Activated CD4-positive, alpha-beta T cell treated with anti-CD3 and anti-CD28 coated beads for 36 hours (primary cell): ENCODE measurements at regions of chr6 and their contacts with region 1.

Region 1: DNA sequence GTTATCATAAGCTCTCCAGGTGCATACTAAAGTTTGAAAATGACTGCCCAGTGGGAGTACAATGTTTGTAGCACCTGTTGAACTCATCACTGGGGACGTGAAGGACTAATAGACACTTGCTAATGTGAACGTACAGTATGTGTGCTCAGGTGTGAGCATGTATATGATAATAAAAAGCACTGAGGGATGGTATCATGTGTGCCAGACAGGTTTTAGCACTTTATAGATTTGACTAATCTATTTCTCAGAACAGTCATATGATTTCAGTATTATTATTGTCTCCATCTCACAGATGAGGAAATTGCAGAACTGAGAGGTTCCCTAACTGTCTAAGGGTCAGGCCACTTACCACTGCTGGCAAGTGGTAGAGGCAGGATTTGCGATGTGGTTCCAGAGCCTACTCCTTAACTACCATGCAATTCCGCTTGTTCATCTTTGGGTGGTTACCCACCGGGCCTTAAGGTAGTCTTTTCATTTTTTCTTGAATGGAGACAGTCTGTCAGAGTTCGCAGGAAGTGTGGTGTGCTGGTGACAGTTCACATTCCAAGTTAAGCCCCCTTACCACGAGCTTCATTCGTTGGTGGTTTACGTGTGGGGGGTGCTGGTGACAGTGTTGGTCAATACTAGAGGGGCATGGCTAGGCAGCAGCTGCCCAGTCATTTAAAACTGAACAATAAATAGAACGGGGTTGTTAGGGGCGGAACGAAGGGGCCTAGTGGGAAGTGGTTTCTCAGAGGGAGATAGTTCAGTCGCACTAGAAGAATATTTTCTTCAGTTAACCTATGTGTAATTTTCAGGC is 46.8 kb downstream of the RREB1 start:
- DNase-seq: peak; percentile 41
- ATAC-seq: peak; percentile 78
- H3K4me3 Mint-ChIP-seq: no peak overlapping the region
- H3K27ac Mint-ChIP-seq: peak overlapping the region; percentile 59
- H3K4me1 Mint-ChIP-seq: peaks cover 83% of the 10 kb centered on the region
- H3K27me3 Mint-ChIP-seq: no peaks in the 10 kb centered on the region

Region 2: GRCh38 chr6:7140631-7141378 is 13.7 kb before region 1 on chr6:
- CTCF ChIA-PET with region 1: interaction called, 3 read pairs
- POLR2A ChIA-PET with region 1: interaction called, 6 read pairs
- intact Hi-C with region 1: loop called (anchors 1 to 2 kb)
- DNase-seq: peak; percentile 91
- ATAC-seq: peak; percentile 72
- H3K4me3 Mint-ChIP-seq: peak overlapping the region; percentile 72
- H3K27ac Mint-ChIP-seq: peak overlapping the region; percentile 85
- H3K4me1 Mint-ChIP-seq: peaks cover 82% of the 10 kb centered on the region
- H3K27me3 Mint-ChIP-seq: no peaks in the 10 kb centered on the region

Region 3: DNA sequence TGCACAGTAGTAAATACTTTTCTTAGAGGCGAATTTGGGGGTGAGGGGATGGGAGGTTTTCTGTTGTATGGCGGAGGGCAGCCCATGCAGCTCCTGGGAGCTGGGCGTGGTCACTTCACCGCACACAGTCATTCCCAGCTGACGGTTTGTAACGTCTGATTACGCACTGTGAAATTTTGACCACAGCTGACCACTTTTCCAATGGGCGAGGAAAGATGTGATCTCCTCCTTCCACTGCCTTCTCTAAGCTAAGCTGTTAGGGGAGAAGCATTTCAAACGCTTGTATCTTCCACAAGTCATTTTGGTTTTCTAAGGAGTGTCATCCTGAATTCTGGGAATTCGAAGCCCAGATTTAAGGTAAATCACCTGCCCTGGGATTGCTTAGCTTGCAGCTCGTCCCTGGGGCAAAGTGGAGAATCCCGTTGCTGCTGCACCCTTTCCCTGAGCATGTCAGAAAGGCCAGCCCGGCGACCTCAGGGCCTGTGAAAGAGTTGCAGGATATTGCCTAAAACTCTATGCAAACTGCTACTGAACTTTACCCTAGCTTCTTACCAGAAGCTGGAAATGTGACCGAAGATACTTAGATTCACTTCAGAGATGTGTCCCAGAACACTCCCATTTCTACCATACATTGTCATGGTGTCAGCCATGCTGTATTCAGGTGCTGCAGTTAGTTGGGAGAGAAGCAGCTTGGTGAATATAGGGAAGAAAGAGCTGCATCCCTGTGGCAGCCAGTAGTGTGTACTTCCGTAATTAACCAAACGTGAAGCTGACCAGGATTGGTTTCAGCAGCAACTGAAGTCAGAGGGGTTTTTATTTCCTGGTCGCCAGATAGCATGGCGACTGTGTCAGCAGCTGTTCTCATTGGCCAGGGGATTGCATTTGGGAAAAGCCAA is 12.1 kb after region 1 on chr6:
- CTCF ChIA-PET with region 1: interaction called, 10 read pairs
- POLR2A ChIA-PET with region 1: no interaction called
- intact Hi-C with region 1: no loop called
- DNase-seq: no peak
- ATAC-seq: no peak
- H3K4me3 Mint-ChIP-seq: no peak overlapping the region
- H3K27ac Mint-ChIP-seq: no peak overlapping the region
- H3K4me1 Mint-ChIP-seq: peaks cover 39% of the 10 kb centered on the region
- H3K27me3 Mint-ChIP-seq: no peaks in the 10 kb centered on the region